ENCODE measurements at regions of chr12 and their contacts with region 1.

Region 1: GRCh38 chr12:62934799-62935674 is at the start of gene PPM1H:
- DNase-seq: peak; percentile 48
- H3K4me3 Mint-ChIP-seq: peak within 1 kb of the TSS; percentile 84
- H3K27ac Mint-ChIP-seq: peak within 1 kb of the TSS; percentile 61
- H3K4me1 Mint-ChIP-seq: peaks cover 13% of the 10 kb centered on the region
- H3K27me3 Mint-ChIP-seq: peaks cover 20% of the 10 kb centered on the region
- CTCF ChIP-seq: peak; percentile 40
- total RNA-seq, gene PPM1H: 0.49 and 2.0 TPM in 2 replicates

Region 2: DNA sequence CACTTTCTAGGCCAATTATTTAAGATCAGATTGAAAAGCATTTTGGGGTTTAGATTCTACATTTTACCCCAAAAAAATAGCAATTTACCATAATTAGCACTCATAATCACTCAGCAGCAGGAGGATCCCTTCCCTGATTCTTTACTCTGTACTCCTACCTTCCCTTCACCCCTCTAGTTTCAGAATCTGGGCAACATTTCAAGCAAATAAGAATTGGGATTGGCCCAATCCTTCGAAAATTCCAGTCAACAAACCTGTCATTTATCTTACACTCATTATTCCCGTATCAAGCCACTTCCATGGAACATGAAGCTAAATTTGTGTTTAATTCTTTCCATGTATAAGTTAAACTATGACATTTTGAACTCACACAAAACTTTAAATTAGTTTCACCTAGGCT is 1023.9 kb before region 1 on chr12:
- CTCF ChIA-PET with region 1: no interaction called
- POLR2A ChIA-PET with region 1: no interaction called
- intact Hi-C with region 1: no loop called
- DNase-seq: no peak
- H3K4me3 Mint-ChIP-seq: no peak overlapping the region
- H3K27ac Mint-ChIP-seq: no peak overlapping the region
- H3K4me1 Mint-ChIP-seq: no peaks in the 10 kb centered on the region
- H3K27me3 Mint-ChIP-seq: no peaks in the 10 kb centered on the region
- CTCF ChIP-seq: no peak

Region 3: GRCh38 chr12:62919838-62920237 is 15.2 kb before region 1 on chr12:
- CTCF ChIA-PET with region 1: interaction called, 16 read pairs
- POLR2A ChIA-PET with region 1: interaction called, 9 read pairs
- intact Hi-C with region 1: no loop called
- DNase-seq: peak; percentile 75
- H3K4me3 Mint-ChIP-seq: no peak overlapping the region
- H3K27ac Mint-ChIP-seq: peak overlapping the region; percentile 35
- H3K4me1 Mint-ChIP-seq: peaks cover 12% of the 10 kb centered on the region
- H3K27me3 Mint-ChIP-seq: no peaks in the 10 kb centered on the region
- CTCF ChIP-seq: no peak

Region 4: DNA sequence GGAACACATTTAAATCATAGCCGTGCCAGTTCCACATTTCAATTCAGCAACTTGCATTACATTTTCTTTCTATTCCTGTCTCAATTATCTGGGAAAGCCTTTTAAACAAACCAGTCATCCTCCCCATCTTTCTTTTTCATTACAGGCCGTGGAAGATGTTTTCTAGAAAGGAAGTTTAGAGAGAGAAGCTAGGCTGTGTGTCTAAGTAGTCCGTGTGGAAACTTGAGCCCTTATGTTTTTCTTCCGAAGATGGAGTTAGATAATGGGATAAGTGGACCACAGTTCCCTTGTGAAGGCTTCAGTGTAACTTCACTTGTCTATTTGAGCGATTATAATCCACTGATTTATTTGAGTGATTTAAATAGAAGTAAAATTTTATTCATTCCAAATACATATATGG is 12.3 kb after region 1 on chr12:
- CTCF ChIA-PET with region 1: interaction called, 10 read pairs
- POLR2A ChIA-PET with region 1: interaction called, 3 read pairs
- intact Hi-C with region 1: no loop called
- DNase-seq: no peak
- H3K4me3 Mint-ChIP-seq: no peak overlapping the region
- H3K27ac Mint-ChIP-seq: no peak overlapping the region
- H3K4me1 Mint-ChIP-seq: no peaks in the 10 kb centered on the region
- H3K27me3 Mint-ChIP-seq: peaks cover 58% of the 10 kb centered on the region
- CTCF ChIP-seq: no peak

Measured in MCF 10A (cell line).